HEK293 (cell line): ENCODE measurements at regions of chr1 and their contacts with region 1.

Region 1: DNA sequence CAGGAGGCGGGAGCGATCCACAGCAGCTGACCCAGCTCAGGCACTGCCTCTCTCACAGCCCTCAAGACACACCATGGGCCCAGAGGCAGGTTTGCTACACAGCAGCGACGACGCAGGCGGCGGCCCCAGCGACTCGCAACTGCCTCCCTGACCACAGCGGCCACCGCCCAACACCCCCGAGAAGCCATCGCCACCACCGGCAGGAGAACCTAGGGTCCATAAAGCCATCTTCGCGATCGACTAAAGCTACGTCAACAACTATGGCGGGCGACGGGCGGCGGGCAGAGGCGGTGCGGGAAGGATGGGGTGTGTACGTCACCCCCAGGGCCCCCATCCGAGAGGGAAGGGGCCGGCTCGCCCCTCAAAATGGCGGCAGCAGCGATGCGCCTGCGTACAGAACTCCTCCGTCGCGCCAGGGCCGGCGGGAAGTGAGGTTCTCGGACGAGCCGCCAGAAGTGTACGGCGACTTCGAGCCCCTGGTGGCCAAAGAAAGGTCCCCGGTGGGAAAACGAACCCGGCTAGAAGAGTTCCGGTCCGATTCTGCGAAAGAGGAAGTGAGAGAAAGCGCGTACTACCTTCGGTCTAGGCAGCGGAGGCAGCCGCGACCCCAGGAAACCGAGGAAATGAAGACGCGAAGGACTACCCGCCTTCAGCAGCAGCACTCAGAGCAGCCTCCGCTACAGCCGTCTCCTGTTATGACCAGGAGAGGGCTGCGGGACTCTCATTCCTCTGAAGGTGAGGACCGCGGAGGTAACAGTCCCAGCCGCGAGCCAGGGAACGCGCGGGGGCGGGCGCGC is at the start of gene TOR1AIP1:
- H3K4me3 ChIP-seq: peak within 1 kb of the TSS; percentile 83
- H3K27ac ChIP-seq: peak within 1 kb of the TSS; percentile 90
- H3K4me1 ChIP-seq: no peaks in the 10 kb centered on the region
- CTCF ChIP-seq: peak; percentile 90

Region 2: DNA sequence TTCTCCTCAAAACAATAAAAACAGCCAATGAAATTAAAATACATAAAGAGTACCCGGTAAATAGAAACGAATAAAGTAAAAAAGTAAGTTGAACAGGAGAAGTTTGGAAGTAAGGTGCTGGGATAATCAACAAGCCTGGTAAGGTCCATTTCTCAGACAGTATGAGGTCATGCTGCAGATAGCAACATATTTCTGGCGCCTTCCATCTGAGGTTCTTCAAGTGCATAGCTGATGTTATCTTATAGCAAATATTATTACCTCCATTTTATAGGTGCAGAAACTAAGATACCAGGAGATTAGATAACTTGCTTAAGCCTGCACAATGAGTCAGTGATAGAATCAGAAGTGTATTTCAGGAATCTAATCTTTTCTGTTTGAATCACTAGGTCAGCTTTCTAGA is 48.4 kb after region 1 on chr1:
- CTCF ChIA-PET with region 1: interaction called, 3 read pairs
- POLR2A ChIA-PET with region 1: interaction called, 11 read pairs
- H3K4me3 ChIP-seq: no peak overlapping the region
- H3K27ac ChIP-seq: peak overlapping the region; percentile 79; the same call in 1 of the 2 replicates
- H3K4me1 ChIP-seq: peaks cover 17% of the 10 kb centered on the region
- CTCF ChIP-seq: no peak

Region 3: GRCh38 chr1:179954493-179955297 is 72.3 kb after region 1 on chr1 and contains the start of gene CEP350:
- CTCF ChIA-PET with region 1: interaction called, 5 read pairs
- POLR2A ChIA-PET with region 1: interaction called, 29 read pairs
- H3K4me3 ChIP-seq: peak within 1 kb of the TSS; percentile 100
- H3K27ac ChIP-seq: peak within 1 kb of the TSS; percentile 93
- H3K4me1 ChIP-seq: peaks cover 4% of the 10 kb centered on the region; the same call in 1 of the 2 replicates
- CTCF ChIP-seq: peak; percentile 70

Region 4: GRCh38 chr1:180154325-180155181 is 272.1 kb after region 1 on chr1 and contains the start of gene QSOX1:
- CTCF ChIA-PET with region 1: no interaction called
- POLR2A ChIA-PET with region 1: interaction called, 11 read pairs
- H3K4me3 ChIP-seq: peak within 1 kb of the TSS; percentile 73
- H3K27ac ChIP-seq: peak within 1 kb of the TSS; percentile 65; the same call in 1 of the 2 replicates
- H3K4me1 ChIP-seq: peaks cover 11% of the 10 kb centered on the region
- CTCF ChIP-seq: no peak